Breast epithelium (tissue), 4 donors: ENCODE measurements at regions of chr7 and their contacts with region 1.

Region 1: GRCh38 chr7:37225285-37225969 is 223.2 kb downstream of the ELMO1 start:
- DNase-seq: no peak
- H3K4me3 ChIP-seq: no peak overlapping the region
- H3K27ac ChIP-seq: no peak overlapping the region
- H3K4me1 ChIP-seq: no peaks in the 10 kb centered on the region
- H3K27me3 ChIP-seq: no peaks in the 10 kb centered on the region
- CTCF ChIP-seq: no peak
- POLR2A ChIP-seq: no peak

Region 2: DNA sequence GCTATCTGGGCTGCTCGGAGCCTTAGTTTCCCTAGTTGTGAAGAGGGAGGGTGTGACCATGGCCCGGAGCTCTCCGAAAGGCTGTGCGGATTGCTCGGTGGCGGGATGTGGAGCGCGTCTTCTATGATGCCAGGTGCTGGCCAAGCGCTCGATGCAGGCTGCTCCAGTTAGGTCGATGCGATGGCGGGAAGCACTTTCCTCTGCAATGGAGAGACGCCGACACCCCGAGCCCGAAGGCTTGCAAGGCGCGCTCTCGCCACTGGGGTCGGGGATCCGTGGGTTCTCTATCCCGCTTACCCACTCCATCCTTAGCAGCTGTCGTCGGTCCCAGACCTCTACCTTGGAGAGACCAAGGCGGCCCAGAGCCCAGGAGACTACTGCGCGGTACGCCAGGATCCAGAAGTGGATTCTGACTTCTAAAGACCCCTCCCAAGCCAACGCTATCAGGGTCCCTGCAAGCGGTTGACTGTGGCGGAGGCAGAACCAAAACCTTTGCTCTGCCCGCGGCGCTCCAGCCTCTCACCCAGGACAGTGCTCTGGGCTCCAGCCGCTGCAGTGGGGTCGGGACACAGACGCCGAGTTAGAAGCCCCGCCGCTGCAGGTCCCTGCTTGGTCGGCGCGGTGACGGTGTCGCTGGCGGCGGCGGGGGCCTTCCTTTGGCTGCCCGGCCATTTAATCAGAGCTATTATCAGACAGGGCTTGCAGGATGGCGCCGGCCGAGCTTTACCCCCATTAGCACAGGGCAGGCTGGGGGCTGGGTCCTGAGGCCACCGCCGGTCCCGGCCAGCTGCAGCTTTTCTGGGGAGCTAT is 1963.7 kb before region 1 on chr7:
- intact Hi-C with region 1: loop called (anchors 10 kb)
- DNase-seq: no peak
- H3K4me3 ChIP-seq: no peak overlapping the region
- H3K27ac ChIP-seq: no peak overlapping the region
- H3K4me1 ChIP-seq: no peaks in the 10 kb centered on the region
- H3K27me3 ChIP-seq: peaks cover 0 to 80% of the 10 kb centered on the region in 2 donors
- CTCF ChIP-seq: no peak
- POLR2A ChIP-seq: no peak

Region 3: DNA sequence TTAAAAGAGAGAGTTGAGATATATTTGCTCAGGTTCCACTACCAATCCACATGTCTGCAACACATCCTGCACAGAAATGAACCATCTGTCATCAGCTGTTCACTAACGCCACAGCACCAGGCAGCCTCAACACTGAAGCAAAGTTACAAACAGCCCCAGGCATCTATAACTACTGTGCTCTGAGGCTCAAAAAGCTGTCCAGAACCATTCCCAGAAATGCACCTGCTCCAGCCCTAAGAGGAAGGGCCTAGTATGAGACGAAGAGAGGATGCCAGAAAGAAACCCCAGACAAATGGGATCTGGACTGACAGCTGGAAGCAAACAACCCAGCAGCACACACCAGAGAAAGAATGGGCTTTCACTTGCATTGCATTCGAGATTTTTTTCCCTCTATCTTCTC is 63.9 kb after region 1 on chr7:
- intact Hi-C with region 1: no loop called
- DNase-seq: no peak
- H3K4me3 ChIP-seq: no peak overlapping the region
- H3K27ac ChIP-seq: no peak overlapping the region
- H3K4me1 ChIP-seq: no peaks in the 10 kb centered on the region
- H3K27me3 ChIP-seq: no peaks in the 10 kb centered on the region
- CTCF ChIP-seq: no peak
- POLR2A ChIP-seq: no peak